ENCODE measurements at regions of chr11 and their contacts with region 1.

Region 1: GRCh38 chr11:77127232-77127911 is 674 bp upstream of the MYO7A start:
- DNase-seq: peak; percentile 67
- H3K4me3 Mint-ChIP-seq: peak overlapping the region; percentile 29
- H3K27ac Mint-ChIP-seq: no peak overlapping the region
- H3K4me1 Mint-ChIP-seq: peaks cover 5% of the 10 kb centered on the region
- H3K27me3 Mint-ChIP-seq: peaks cover 2% of the 10 kb centered on the region

Region 2: GRCh38 chr11:77113382-77114088 is 13.8 kb before region 1 on chr11:
- CTCF ChIA-PET with region 1: interaction called, 24 read pairs
- POLR2A ChIA-PET with region 1: no interaction called
- intact Hi-C with region 1: no loop called
- DNase-seq: peak; percentile 34
- H3K4me3 Mint-ChIP-seq: no peak overlapping the region
- H3K27ac Mint-ChIP-seq: no peak overlapping the region
- H3K4me1 Mint-ChIP-seq: no peaks in the 10 kb centered on the region
- H3K27me3 Mint-ChIP-seq: no peaks in the 10 kb centered on the region

Region 3: DNA sequence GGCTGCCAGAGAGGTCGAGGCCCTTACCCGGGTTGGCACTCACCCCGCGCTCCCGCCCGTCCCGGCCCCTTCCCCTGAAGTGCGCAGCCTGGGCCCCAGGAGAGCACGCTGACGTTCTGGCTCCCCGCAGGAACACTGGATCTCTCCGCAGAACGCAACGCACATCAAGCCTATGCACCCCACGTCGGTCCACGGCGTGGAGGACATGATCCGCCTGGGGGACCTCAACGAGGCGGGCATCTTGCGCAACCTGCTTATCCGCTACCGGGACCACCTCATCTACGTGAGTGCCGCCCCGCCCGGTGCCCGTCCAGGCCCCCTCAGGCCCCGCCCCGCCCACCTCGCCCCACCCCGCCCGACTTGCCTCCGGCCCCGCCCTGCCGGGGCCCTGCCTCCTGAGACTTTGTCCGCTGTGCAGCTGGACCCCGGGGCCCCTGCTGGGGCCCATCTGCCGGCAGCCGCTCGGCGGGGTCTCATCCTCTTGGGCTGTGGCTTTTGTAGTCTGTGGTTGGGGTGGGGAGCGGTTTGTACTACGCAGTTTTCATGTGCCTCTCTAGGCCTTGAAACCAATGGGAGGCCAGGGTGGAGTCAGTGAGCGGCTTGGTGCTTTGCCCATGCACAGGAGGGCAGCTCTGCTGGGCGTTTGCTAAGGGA is 20.4 kb after region 1 on chr11:
- CTCF ChIA-PET with region 1: interaction called, 26 read pairs
- POLR2A ChIA-PET with region 1: no interaction called
- intact Hi-C with region 1: no loop called
- DNase-seq: peak; percentile 47
- H3K4me3 Mint-ChIP-seq: peak overlapping the region; percentile 46
- H3K27ac Mint-ChIP-seq: peak overlapping the region; percentile 10
- H3K4me1 Mint-ChIP-seq: peaks cover 26% of the 10 kb centered on the region
- H3K27me3 Mint-ChIP-seq: peaks cover 3% of the 10 kb centered on the region

Region 4: GRCh38 chr11:77154381-77155081 is 27.2 kb after region 1 on chr11:
- CTCF ChIA-PET with region 1: interaction called, 26 read pairs
- POLR2A ChIA-PET with region 1: no interaction called
- intact Hi-C with region 1: no loop called
- DNase-seq: no peak
- H3K4me3 Mint-ChIP-seq: no peak overlapping the region
- H3K27ac Mint-ChIP-seq: no peak overlapping the region
- H3K4me1 Mint-ChIP-seq: peaks cover 24% of the 10 kb centered on the region
- H3K27me3 Mint-ChIP-seq: peaks cover 3% of the 10 kb centered on the region

Region 5: DNA sequence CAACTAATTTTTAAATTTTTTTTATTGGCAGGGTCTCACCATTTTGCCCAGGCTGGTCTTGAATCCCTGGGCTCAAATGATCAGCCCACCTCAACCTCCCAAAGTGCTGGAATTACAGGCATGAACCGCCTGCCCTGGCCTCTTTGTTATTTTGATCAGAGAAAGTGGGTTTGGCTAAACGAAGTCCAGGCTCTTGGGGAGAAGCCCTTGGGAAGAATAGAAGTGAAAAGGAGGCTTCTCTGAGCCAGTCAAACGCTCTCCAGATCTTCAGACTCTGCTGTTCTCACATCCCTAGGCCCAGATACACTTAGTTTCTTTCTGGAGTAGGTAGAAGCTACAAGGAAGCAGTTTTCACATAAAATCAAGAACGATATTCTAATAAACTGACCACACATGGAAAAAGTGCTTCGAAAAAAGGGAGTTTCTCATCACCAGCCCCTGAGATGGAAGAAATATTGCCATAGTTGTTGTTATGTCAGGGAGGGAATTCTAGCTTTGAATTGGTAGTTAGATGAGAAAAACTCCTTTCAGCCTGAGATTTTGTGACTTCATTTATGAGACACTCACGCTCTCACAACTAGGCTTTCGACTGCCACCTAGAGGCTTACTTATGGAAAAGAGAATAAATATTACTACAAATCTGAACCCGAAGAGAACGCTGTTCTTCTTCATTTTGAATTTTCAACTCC is 420.6 kb after region 1 on chr11:
- CTCF ChIA-PET with region 1: interaction called, 36 read pairs
- POLR2A ChIA-PET with region 1: no interaction called
- intact Hi-C with region 1: loop called (anchors 2 kb)
- DNase-seq: peak; percentile 21
- H3K4me3 Mint-ChIP-seq: no peak overlapping the region
- H3K27ac Mint-ChIP-seq: no peak overlapping the region
- H3K4me1 Mint-ChIP-seq: peaks cover 2% of the 10 kb centered on the region
- H3K27me3 Mint-ChIP-seq: no peaks in the 10 kb centered on the region

Measured in activated CD4-positive, alpha-beta memory T cell treated with anti-CD3 and anti-CD28 coated beads for 36 hours (primary cell).